Activated T-helper 1 cell treated with anti-CD3 and anti-CD28 coated beads, Interleukin-12 subunit alpha, Interleukin-12 subunit beta, Interleukin-2, Interleukin-4 antibody, amounts not matched to agents 30 ng/mL and 10 ng/mL and 1 ng/mL, durations not matched to agents 14 hours and 24 hours and 36 hours (primary cell): ENCODE measurements at regions of chr2 and their contacts with region 1.

Region 1: DNA sequence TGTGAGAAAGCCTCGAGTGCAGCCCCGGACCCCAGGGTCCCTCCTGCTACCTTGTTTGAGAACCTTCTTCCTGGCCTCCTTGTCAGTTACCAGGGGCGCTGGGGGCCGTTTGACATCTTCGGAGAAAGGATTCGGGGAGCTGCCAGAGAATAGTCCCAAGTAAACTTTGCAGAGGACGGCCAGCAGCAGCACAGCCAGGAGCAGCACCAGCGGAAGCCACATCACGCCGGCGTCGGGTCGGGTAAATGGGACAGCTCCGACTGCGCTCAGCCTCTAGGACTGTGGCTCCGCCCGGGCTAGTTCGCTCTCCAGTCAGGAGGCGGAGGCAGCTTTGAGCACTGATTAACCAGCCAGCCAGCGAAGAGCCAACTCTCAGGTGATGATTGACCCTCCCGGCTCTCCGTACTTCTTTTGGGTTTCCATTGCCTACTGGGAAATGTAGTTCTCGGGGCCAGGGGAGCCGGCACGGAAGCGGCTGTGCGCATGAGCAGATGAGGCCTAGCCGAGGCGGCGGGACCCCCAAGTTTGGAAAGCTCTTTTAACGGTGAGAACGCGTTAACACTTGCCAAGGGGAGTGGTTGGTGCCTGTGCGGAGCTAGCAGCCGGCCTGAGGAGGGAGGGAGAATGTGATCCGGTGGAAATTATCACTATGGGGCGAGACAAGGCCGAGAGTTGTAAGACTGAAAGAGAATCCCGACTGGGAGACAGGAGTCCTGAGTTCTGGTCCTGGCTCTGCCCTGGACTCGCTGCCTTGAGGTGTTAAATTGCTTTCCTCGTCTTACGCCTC is at the starts of genes ELMOD3 and RETSAT:
- DNase-seq: peak; percentile 97
- H3K4me3 Mint-ChIP-seq: peak within 1 kb of the TSS; percentile 100
- H3K27ac Mint-ChIP-seq: peak within 1 kb of the TSS; percentile 98
- H3K4me1 Mint-ChIP-seq: peaks cover 44% of the 10 kb centered on the region
- H3K27me3 Mint-ChIP-seq: no peaks in the 10 kb centered on the region
- total RNA-seq, gene ELMOD3: 13.8 and 15.9 TPM in 2 replicates
- total RNA-seq, gene RETSAT: 23.4 and 25.9 TPM in 2 replicates

Region 2: GRCh38 chr2:85327822-85328617 is 26.5 kb before region 1 on chr2 and contains the start of gene TGOLN2:
- intact Hi-C with region 1: loop called (anchors 1 kb)
- DNase-seq: peak; percentile 92
- H3K4me3 Mint-ChIP-seq: peak within 1 kb of the TSS; percentile 95
- H3K27ac Mint-ChIP-seq: peak within 1 kb of the TSS; percentile 99
- H3K4me1 Mint-ChIP-seq: peaks cover 34% of the 10 kb centered on the region
- H3K27me3 Mint-ChIP-seq: no peaks in the 10 kb centered on the region
- total RNA-seq, gene TGOLN2: 102 and 104 TPM in 2 replicates

Region 3: GRCh38 chr2:85437488-85438284 is 83.2 kb after region 1 on chr2:
- intact Hi-C with region 1: loop called (anchors 1 kb)
- DNase-seq: peak; percentile 66
- H3K4me3 Mint-ChIP-seq: peak overlapping the region; percentile 88
- H3K27ac Mint-ChIP-seq: peak overlapping the region; percentile 97
- H3K4me1 Mint-ChIP-seq: peaks cover 26% of the 10 kb centered on the region
- H3K27me3 Mint-ChIP-seq: peaks cover 1% of the 10 kb centered on the region

Region 4: GRCh38 chr2:85551698-85552678 is 197.5 kb after region 1 on chr2:
- intact Hi-C with region 1: loop called (anchors 2 kb)
- DNase-seq: peak; percentile 80
- H3K4me3 Mint-ChIP-seq: no peak overlapping the region
- H3K27ac Mint-ChIP-seq: no peak overlapping the region
- H3K4me1 Mint-ChIP-seq: peaks cover 8% of the 10 kb centered on the region
- H3K27me3 Mint-ChIP-seq: no peaks in the 10 kb centered on the region

Region 5: DNA sequence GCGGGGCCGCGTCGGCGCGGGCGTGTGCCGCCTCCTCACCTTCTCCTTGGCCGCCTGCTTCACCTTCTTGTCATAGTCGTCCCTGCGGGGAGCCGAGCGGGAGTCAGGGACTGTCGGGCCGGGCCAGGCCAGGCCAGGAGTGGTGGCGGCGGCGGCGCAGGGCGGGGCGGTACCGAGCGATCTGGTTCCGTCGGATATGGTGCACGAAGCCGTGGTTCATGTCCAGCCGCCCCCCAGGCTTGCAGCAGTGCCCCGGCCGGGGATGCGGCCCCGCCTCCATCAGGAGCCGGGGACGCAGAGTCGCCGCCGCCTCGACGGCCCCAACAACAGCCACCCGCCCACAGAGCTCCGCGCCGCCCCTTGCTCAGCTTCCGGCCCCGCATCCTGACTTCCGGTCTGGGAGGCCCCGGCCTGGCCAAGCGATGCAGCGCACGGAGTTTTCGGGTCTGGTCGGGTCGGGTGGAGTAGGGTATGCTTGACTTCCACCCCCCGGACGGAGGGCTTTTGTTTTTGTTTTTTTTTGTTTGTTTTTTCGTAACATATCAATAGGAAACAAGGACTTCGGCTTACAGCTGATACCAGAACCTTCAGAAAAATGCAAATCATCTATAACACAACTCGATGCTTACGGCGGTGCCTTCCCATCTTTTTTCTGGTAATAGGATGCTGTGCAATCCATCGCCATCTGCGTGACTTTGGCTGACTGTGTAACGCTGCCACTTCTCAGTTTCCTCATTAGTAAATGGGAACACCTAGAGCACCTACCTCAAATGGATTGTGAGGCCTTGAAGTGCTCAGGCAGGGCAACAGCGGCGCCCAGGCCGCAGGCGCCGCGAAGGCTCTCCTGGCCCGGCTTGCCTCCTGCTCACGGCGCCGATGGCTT is 257.5 kb after region 1 on chr2 and contains the start of gene C2orf68:
- intact Hi-C with region 1: loop called (anchors 1 kb)
- DNase-seq: peak; percentile 86
- H3K4me3 Mint-ChIP-seq: peak within 1 kb of the TSS; percentile 98
- H3K27ac Mint-ChIP-seq: peak within 1 kb of the TSS; percentile 89
- H3K4me1 Mint-ChIP-seq: peaks cover 12% of the 10 kb centered on the region
- H3K27me3 Mint-ChIP-seq: no peaks in the 10 kb centered on the region
- total RNA-seq, gene C2orf68: 36.3 and 36.7 TPM in 2 replicates

Region 6: DNA sequence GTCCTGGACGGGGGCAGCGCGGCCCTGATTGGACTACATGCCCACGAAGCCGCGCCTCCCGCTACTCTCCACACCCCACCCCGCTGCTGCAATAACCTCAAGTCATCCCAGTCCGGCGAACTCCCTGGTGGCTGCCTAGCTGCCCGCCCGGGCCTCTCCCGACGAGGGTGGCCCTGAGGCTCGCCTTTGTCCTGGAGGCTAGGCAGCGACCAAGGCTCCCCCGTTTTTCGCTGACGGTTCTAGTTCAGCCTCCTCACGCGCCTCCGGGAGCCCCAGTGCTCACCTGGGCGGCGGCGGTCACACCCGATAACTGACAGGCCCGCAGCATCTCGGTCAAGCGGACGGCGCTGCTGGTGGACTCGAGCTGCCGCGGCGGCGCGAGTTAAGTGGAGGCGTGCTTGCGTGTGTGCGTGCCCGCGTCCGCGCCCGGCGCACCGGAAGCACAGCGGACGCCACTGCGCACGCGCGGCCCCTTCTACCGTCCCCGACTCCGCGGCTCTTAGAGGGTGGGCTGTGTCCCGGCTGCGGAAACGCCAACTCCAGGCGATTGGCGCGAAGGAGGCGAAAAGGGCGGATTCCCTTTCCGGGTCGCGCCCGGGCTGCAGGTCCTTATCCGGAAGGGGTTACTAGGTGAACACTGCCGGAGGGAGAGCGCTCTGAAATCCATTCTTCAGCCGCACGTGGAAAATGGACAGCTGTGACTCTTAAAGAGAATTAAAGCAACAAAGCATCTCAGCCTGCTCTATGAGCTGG is 840.8 kb after region 1 on chr2 and contains the start of gene IMMT:
- intact Hi-C with region 1: loop called (anchors 10 kb)
- DNase-seq: peak; percentile 93
- H3K4me3 Mint-ChIP-seq: peak within 1 kb of the TSS; percentile 99
- H3K27ac Mint-ChIP-seq: peak within 1 kb of the TSS; percentile 93
- H3K4me1 Mint-ChIP-seq: peaks cover 45% of the 10 kb centered on the region
- H3K27me3 Mint-ChIP-seq: no peaks in the 10 kb centered on the region
- total RNA-seq, gene IMMT: 164 and 166 TPM in 2 replicates